HCT116 (cell line): ENCODE measurements at regions of chr17 and their contacts with region 1.

Region 1: DNA sequence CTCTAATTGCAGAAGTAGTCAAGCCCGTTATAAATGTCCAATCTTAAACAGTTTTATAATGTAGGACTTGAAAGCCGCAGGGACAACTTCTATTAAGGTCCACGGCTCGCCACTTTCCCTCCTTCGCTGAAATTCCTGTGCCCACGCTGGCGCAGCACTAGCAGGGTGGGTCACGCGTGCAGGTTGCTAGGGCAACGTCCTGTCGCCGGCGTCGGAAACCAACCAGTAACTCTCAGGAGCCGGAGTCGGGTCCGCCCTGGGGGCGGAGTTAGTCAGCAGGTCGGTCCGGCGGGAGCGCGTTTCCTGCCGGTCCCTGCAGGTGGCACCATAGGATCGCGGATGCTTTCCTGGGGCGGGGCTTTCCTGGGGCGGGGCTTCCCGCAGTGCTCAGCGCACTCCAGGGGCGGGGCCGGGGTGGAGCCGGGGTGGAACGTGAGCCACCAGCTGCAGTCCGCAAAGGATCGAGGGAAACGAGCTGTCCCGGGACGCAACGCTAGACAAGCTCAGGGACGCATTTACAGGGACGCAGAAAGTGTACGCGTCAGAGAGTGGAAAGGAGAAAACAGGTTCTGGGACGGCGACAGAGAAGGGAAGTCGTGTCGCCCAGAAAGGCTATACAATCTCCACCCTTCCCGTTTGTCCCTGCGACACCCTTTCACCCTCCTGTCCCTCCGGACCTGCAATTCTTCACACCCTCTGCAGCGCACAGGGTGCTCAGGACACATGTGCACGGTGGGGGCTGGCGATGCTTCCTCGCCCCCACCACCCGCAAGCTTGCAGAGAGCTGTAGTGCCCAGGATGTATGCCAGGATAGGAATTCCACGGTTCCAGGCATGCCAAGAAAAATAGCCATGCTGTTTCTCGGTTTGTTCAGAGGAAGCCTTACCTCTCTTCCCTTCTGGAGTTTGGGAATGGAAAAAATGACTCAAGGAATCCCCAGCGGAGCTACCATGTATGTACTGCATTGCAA is 12.4 kb downstream of the COPZ2 start:
- DNase-seq: peak; percentile 98
- ATAC-seq: peak; percentile 73
- H3K4me3 ChIP-seq: peak overlapping the region; percentile 61 to 62
- H3K27ac ChIP-seq: peak overlapping the region; percentile 93
- H3K4me1 ChIP-seq: peaks cover 26 to 45% of the 10 kb centered on the region in 2 experiments
- H3K27me3 ChIP-seq: no peaks in the 10 kb centered on the region
- CTCF ChIP-seq: peak in 2 of 3 experiments; percentile 87 to 92; a peak in 4 of 6 replicates
- POLR2A ChIP-seq: peak; percentile 69
- RAD21 ChIP-seq: no peak

Region 2: GRCh38 chr17:48068491-48068961 is 43.3 kb after region 1 on chr17:
- CTCF ChIA-PET with region 1: interaction called, 79 read pairs
- POLR2A ChIA-PET with region 1: interaction called, 3 read pairs
- RAD21 ChIA-PET with region 1: interaction called, 3 read pairs
- intact Hi-C with region 1: no loop called
- DNase-seq: no peak
- ATAC-seq: peak; percentile 88
- H3K4me3 ChIP-seq: no peak overlapping the region
- H3K27ac ChIP-seq: no peak overlapping the region
- H3K4me1 ChIP-seq: no peaks in the 10 kb centered on the region
- H3K27me3 ChIP-seq: no peaks in the 10 kb centered on the region
- CTCF ChIP-seq: peak in 2 of 3 experiments; percentile 64 to 66; a peak in 4 of 6 replicates
- POLR2A ChIP-seq: no peak
- RAD21 ChIP-seq: peak; percentile 27; the same call in 1 of the 2 replicates

Region 3: GRCh38 chr17:48101012-48101720 is 75.9 kb after region 1 on chr17 and contains the start of gene CBX1:
- CTCF ChIA-PET with region 1: interaction called, 23 read pairs
- POLR2A ChIA-PET with region 1: interaction called, 6 read pairs
- RAD21 ChIA-PET with region 1: interaction called, 3 read pairs
- intact Hi-C with region 1: no loop called
- DNase-seq: peak; percentile 94
- ATAC-seq: peak; percentile 92
- H3K4me3 ChIP-seq: peak within 1 kb of the TSS; percentile 93 to 94
- H3K27ac ChIP-seq: peak within 1 kb of the TSS; percentile 95
- H3K4me1 ChIP-seq: peaks cover 10 to 29% of the 10 kb centered on the region in 2 experiments
- H3K27me3 ChIP-seq: no peaks in the 10 kb centered on the region
- CTCF ChIP-seq: no peak
- POLR2A ChIP-seq: peak; percentile 67
- RAD21 ChIP-seq: no peak
- total RNA-seq, gene CBX1: 136 TPM

Region 4: DNA sequence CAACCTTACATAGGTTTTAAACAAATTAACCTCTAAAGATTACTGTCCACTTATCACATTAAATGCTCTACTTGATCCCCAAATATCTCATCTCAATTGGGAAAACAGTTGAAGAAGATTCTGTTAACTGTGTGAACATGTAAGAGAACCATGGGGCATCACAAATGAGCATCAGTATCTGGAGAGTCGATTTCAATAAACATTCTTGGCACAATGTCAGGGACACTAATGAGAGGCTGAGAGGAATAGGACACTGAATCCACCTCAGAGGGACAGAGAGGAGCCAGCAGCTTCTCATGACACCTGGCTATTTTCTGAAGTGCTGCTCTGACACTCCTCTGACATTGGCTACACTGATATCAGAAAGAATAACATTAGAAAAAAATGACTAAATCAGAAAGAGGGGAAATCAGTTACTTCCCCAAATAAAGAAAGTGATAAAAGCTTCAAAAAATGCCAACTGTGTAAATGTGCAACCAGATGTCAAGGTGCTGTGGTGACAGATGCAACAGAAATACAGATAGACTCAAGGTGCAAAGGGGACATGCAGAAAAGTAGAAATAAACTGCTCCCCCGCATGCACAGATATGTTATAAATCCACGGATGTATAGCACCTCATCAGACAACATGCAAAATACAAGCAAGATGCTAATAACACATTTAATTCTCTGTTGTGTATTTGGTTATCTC is 149.8 kb after region 1 on chr17:
- CTCF ChIA-PET with region 1: no interaction called
- POLR2A ChIA-PET with region 1: no interaction called
- RAD21 ChIA-PET with region 1: no interaction called
- intact Hi-C with region 1: no loop called
- DNase-seq: no peak
- ATAC-seq: no peak
- H3K4me3 ChIP-seq: no peak overlapping the region
- H3K27ac ChIP-seq: no peak overlapping the region
- H3K4me1 ChIP-seq: no peaks in the 10 kb centered on the region
- H3K27me3 ChIP-seq: no peaks in the 10 kb centered on the region
- CTCF ChIP-seq: no peak
- POLR2A ChIP-seq: no peak
- RAD21 ChIP-seq: no peak

Region 5: GRCh38 chr17:48307814-48308411 is 282.7 kb after region 1 on chr17:
- CTCF ChIA-PET with region 1: interaction called, 11 read pairs
- POLR2A ChIA-PET with region 1: no interaction called
- RAD21 ChIA-PET with region 1: interaction called, 3 read pairs
- intact Hi-C with region 1: no loop called
- DNase-seq: peak; percentile 78
- ATAC-seq: peak; percentile 100
- H3K4me3 ChIP-seq: no peak overlapping the region
- H3K27ac ChIP-seq: no peak overlapping the region
- H3K4me1 ChIP-seq: no peaks in the 10 kb centered on the region
- H3K27me3 ChIP-seq: no peaks in the 10 kb centered on the region
- CTCF ChIP-seq: peak; percentile 81 to 99 (median 98)
- POLR2A ChIP-seq: no peak
- RAD21 ChIP-seq: peak; percentile 75

Region 6: GRCh38 chr17:48612854-48613691 is 587.9 kb after region 1 on chr17:
- CTCF ChIA-PET with region 1: interaction called, 12 read pairs
- POLR2A ChIA-PET with region 1: interaction called, 3 read pairs
- RAD21 ChIA-PET with region 1: no interaction called
- intact Hi-C with region 1: loop called (anchors 2 kb)
- DNase-seq: no peak
- ATAC-seq: peak; percentile 19
- H3K4me3 ChIP-seq: peak overlapping the region; percentile 80 to 90
- H3K27ac ChIP-seq: peak overlapping the region; percentile 98
- H3K4me1 ChIP-seq: peaks cover 19 to 58% of the 10 kb centered on the region in 2 experiments; a peak in 3 of 4 replicates
- H3K27me3 ChIP-seq: no peaks in the 10 kb centered on the region
- CTCF ChIP-seq: peak in 1 of 3 experiments; percentile 14; a peak in 2 of 6 replicates
- POLR2A ChIP-seq: no peak
- RAD21 ChIP-seq: no peak

Region 7: DNA sequence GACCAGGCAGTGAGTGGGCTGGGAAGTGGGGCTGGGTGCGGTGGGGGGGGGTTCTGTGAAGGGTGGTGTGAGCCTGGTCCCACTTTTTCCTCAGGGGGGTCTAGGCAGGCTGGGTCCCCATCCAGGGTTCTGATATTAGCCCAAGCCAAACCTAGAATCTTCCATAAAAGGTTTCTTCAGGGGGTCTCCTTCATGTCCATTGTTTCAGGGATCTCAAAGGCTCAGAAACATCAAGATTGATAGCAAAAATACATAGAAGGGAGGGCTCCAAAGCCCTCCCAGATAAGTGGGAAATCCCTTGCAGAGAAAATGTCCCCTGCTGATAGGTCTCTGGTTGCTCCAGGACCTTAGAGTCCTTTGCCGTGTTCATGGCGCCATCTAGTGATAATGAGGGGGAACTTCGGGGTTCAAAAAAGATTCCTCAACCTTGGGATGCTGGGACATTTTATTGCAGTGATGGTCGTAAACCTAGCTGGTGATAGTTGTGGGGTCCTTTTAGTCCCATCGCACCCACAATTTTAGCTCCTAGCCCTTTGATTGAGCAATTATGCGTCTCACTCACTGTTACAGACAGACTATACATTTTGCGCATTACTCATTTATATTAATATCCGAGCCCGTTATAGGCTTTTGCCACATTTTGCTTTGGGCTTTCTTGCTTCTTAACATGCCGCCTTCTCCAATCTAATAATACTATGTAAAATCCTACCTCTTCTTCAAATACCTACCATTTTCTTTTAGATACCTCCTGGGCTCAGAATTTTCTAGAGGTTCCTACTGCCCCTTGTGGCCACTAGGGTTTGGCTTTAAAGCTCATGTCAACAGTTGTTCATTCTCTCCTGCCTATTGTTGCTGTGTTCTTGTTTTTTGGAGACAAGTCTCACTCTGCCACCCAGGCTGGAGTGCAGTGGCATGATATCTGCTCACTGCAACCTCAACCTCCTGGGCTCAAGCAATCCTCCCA is 1007.0 kb after region 1 on chr17:
- CTCF ChIA-PET with region 1: interaction called, 3 read pairs
- POLR2A ChIA-PET with region 1: no interaction called
- RAD21 ChIA-PET with region 1: no interaction called
- intact Hi-C with region 1: loop called (anchors 10 kb)
- DNase-seq: peak; percentile 82
- ATAC-seq: peak; percentile 67
- H3K4me3 ChIP-seq: peak overlapping the region; percentile 6 to 13; a peak in 2 of 4 replicates
- H3K27ac ChIP-seq: peak overlapping the region; percentile 25; the same call in 1 of the 2 replicates
- H3K4me1 ChIP-seq: peaks cover 12 to 25% of the 10 kb centered on the region in 2 experiments
- H3K27me3 ChIP-seq: no peaks in the 10 kb centered on the region
- CTCF ChIP-seq: peak; percentile 79 to 98 (median 92)
- POLR2A ChIP-seq: no peak
- RAD21 ChIP-seq: peak; percentile 100